Cardiac septum (tissue), 1 donor: ENCODE measurements at regions of chr5 and their contacts with region 1.

Region 1: GRCh38 chr5:80191991-80192398 is 63.9 kb downstream of the SERINC5 start:
- DNase-seq: no peak

Region 2: GRCh38 chr5:80109646-80110478 is 82.1 kb before region 1 on chr5:
- intact Hi-C with region 1: loop called (anchors 5 kb)
- DNase-seq: peak; percentile 84

Region 3: DNA sequence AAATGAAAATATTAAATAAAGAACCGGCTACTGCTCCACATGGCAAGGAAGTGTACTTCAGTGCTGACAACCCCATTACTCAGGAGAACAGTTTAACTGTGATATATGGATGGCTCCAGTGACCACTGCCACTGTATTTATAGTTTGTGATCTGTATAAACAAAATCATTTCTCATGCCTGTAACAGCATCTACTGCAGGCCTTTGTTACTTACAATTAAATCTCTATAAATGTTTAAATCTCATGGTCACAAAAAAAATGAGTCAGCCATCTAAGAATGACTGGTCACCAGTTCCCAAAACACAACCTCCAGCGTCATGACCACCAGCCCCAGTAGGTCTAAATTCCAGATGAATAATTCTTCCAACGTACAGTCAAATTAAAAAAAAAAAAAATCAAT is 39.2 kb after region 1 on chr5:
- intact Hi-C with region 1: no loop called
- DNase-seq: no peak